ENCODE measurements at regions of chr13 and their contacts with region 1.

Region 1: DNA sequence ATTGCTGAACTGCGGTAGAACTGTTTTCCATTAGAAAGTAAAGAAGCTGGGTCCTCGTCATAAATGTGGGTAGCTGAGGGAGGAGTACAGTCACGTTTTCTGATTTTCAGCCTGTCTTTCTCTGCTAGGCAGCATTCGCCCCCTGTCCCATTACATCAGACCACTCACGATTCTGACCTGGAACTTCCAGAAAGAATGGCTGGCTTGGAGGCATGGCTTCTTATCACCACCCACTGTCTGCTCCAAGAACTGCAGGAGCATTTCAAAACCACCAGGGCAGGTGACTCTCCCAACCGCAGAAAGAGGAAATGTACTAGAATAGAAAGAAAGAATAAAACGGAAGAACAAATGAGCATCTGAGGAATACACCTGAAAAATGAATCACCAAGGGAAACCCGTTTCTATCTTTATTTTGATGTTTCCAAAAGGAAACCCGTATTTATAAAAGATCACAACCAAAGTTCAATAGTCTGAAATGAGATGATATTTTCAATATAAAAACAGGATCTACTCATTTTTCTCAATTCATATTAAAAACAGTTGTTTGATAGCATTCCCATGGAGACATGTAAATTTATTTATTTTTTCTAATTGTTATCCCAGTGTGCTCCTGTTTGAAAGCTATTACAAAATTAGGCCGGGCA is 22.1 kb upstream of the POMP start:
- DNase-seq: peak in 2 of 3 donors; percentile 51 to 71
- ATAC-seq: peak; percentile 96
- H3K4me3 ChIP-seq: no peak overlapping the region
- H3K4me1 ChIP-seq: no peaks in the 10 kb centered on the region
- CTCF ChIP-seq: peak; percentile 86

Region 2: GRCh38 chr13:28324181-28324789 is 312.5 kb before region 1 on chr13:
- intact Hi-C with region 1: loop called in 1 of 2 experiments (anchors 10 kb)
- DNase-seq: peak in 2 of 3 donors; percentile 35 to 85
- ATAC-seq: peak; percentile 83
- H3K4me3 ChIP-seq: no peak overlapping the region
- H3K4me1 ChIP-seq: peaks cover 3% of the 10 kb centered on the region
- CTCF ChIP-seq: peak; percentile 70

Region 3: DNA sequence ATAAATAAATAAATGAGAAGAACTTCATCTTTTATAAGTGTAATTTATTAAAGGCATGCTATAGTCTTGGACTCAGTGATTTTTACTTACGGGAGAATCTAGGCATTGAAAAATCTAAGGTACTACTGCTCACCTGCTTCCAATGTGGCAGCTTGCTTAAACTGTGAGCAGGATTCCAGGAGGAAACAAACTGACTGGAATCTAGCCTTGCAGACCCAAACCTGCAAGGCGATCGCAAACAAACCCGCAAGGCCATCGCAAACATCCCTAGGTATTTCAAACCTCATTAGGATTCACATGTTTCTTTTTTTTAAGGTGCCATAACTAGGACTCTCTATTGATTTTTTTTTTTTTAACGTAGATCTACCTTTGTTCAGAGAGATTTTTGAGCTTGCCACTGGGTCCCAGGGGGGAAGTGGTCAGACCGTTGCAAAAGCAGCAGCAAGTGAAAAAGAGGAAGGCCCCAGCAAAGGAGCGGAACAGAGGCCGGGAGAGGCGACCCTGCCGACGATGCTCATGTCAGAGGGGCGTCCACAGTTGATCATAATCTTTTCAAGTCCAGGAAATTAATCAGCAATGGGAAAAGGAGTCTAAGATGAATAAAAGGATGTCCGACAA is 109.3 kb before region 1 on chr13:
- intact Hi-C with region 1: loop called in 1 of 2 experiments (anchors 5 kb)
- DNase-seq: no peak
- ATAC-seq: no peak
- H3K4me3 ChIP-seq: no peak overlapping the region
- H3K4me1 ChIP-seq: peaks cover 14% of the 10 kb centered on the region
- CTCF ChIP-seq: no peak

Measured in mucosa of descending colon (tissue), 3 donors.